CD4-positive, alpha-beta T cell (primary cell): ENCODE measurements at regions of chr14 and their contacts with region 1.

Region 1: GRCh38 chr14:34671716-34672115 is 41.8 kb upstream of the SNX6 start:
- DNase-seq: no peak
- ATAC-seq: no peak
- H3K4me3 ChIP-seq: no peak overlapping the region
- H3K4me3 Mint-ChIP-seq: no peak overlapping the region
- H3K27ac ChIP-seq: no peak overlapping the region
- H3K27ac Mint-ChIP-seq: no peak overlapping the region
- H3K4me1 ChIP-seq: peaks cover 5% of the 10 kb centered on the region
- H3K4me1 Mint-ChIP-seq: no peaks in the 10 kb centered on the region
- H3K27me3 ChIP-seq: no peaks in the 10 kb centered on the region
- H3K27me3 Mint-ChIP-seq: no peaks in the 10 kb centered on the region
- CTCF ChIP-seq: no peak

Region 2: GRCh38 chr14:34436118-34436880 is 235.4 kb before region 1 on chr14:
- CTCF ChIA-PET with region 1: no interaction called
- POLR2A ChIA-PET with region 1: no interaction called
- intact Hi-C with region 1: no loop called
- DNase-seq: no peak
- ATAC-seq: no peak
- H3K4me3 ChIP-seq: no peak overlapping the region
- H3K4me3 Mint-ChIP-seq: no peak overlapping the region
- H3K27ac ChIP-seq: no peak overlapping the region
- H3K27ac Mint-ChIP-seq: no peak overlapping the region
- H3K4me1 ChIP-seq: no peaks in the 10 kb centered on the region
- H3K4me1 Mint-ChIP-seq: no peaks in the 10 kb centered on the region
- H3K27me3 ChIP-seq: no peaks in the 10 kb centered on the region
- H3K27me3 Mint-ChIP-seq: no peaks in the 10 kb centered on the region
- CTCF ChIP-seq: no peak

Region 3: GRCh38 chr14:35423621-35424020 is 751.9 kb after region 1 on chr14:
- CTCF ChIA-PET with region 1: no interaction called
- POLR2A ChIA-PET with region 1: no interaction called
- intact Hi-C with region 1: loop called in 1 of 2 experiments (anchors 2 kb)
- DNase-seq: no peak
- ATAC-seq: no peak
- H3K4me3 ChIP-seq: no peak overlapping the region
- H3K4me3 Mint-ChIP-seq: no peak overlapping the region
- H3K27ac ChIP-seq: no peak overlapping the region
- H3K27ac Mint-ChIP-seq: no peak overlapping the region
- H3K4me1 ChIP-seq: peaks cover 5% of the 10 kb centered on the region
- H3K4me1 Mint-ChIP-seq: peaks cover 4% of the 10 kb centered on the region
- H3K27me3 ChIP-seq: no peaks in the 10 kb centered on the region
- H3K27me3 Mint-ChIP-seq: no peaks in the 10 kb centered on the region
- CTCF ChIP-seq: no peak